ENCODE measurements at regions of chr22 and their contacts with region 1.

Region 1: GRCh38 chr22:40512426-40513136 is 123.9 kb downstream of the MRTFA start:
- H3K4me3 ChIP-seq: no peak overlapping the region
- H3K27ac ChIP-seq: peak overlapping the region; percentile 7
- H3K4me1 ChIP-seq: peaks cover 44% of the 10 kb centered on the region
- CTCF ChIP-seq: no peak

Region 2: GRCh38 chr22:40396882-40397281 is 115.7 kb before region 1 on chr22:
- CTCF ChIA-PET with region 1: no interaction called
- POLR2A ChIA-PET with region 1: no interaction called
- H3K4me3 ChIP-seq: no peak overlapping the region
- H3K27ac ChIP-seq: no peak overlapping the region
- H3K4me1 ChIP-seq: peaks cover 5% of the 10 kb centered on the region
- CTCF ChIP-seq: no peak

Region 3: GRCh38 chr22:40525249-40525884 is 12.8 kb after region 1 on chr22:
- CTCF ChIA-PET with region 1: interaction called, 15 read pairs
- POLR2A ChIA-PET with region 1: interaction called, 7 read pairs
- H3K4me3 ChIP-seq: no peak overlapping the region
- H3K27ac ChIP-seq: no peak overlapping the region
- H3K4me1 ChIP-seq: peaks cover 7% of the 10 kb centered on the region; the same call in 1 of the 2 replicates
- CTCF ChIP-seq: no peak